Right ventricle myocardium inferior (tissue), 1 donor: ENCODE measurements at regions of chr2 and their contacts with region 1.

Region 1: GRCh38 chr2:97982621-97983020 is 13.1 kb downstream of the TMEM131 start:
- DNase-seq: no peak
- ATAC-seq: no peak

Region 2: GRCh38 chr2:97935719-97936161 is 46.9 kb before region 1 on chr2:
- intact Hi-C with region 1: loop called (anchors 5 kb)
- DNase-seq: no peak
- ATAC-seq: no peak

Region 3: GRCh38 chr2:97957432-97958186 is 25.0 kb before region 1 on chr2:
- intact Hi-C with region 1: loop called (anchors 1 kb)
- DNase-seq: no peak
- ATAC-seq: no peak

Region 4: DNA sequence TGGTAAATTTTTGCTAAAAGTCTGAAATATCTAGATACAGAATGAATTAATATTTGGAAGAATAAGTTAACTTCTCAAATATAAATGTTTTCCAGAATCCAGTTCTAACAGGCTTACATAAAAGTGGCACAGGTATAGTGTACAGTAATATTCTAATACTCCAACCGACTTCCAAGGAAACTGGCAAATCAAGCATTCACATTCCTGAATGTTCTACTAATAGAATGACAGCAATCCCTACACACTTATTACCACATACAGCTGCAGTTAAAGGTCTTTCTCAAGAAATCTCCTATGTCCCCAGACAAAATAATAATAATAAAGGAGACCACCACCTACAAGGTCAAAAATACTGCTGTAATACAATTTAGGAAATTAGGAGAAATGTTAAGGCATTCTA is 18.7 kb before region 1 on chr2:
- intact Hi-C with region 1: loop called (anchors 1 kb)
- DNase-seq: no peak
- ATAC-seq: no peak